T-cell (primary cell): ENCODE measurements at regions of chr4 and their contacts with region 1.

Region 1: DNA sequence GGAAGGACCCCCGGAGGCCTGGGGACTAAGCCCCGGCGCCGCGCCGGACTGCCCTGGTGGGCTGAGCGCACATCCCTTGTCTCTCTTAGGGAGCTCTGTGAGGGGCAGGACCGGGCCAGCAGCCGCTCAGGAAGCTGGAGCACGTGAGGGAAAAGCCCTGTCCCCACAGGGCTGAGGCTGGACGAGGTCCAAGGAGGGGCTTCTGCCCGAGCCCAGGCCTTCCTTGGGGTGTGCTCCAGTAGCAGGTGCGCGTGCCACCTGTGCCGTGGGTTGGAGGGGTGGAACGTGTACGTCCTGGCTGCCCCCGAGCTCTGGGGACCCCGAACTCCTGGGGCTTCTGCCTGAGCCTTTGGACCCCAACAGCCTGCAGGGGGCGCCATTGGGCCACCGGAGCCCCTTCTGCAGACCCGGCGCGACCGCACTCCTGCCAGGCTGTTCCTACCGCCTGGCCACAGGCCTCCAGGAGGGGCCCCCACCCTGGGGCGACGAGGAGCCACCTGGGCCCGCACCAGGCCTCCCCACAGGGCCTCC is 27.2 kb downstream of the TACC3 start:
- DNase-seq: peak; percentile 41 to 84 (median 69)
- ATAC-seq: peak in 3 of 4 experiments; percentile 52 to 67 (median 52)
- H3K4me3 ChIP-seq: no peak overlapping the region
- H3K4me3 Mint-ChIP-seq: no peak overlapping the region
- H3K27ac ChIP-seq: no peak overlapping the region
- H3K27ac Mint-ChIP-seq: no peak overlapping the region
- H3K4me1 ChIP-seq: peaks cover 9 to 31% of the 10 kb centered on the region in 2 experiments
- H3K4me1 Mint-ChIP-seq: peaks cover 0 to 5% (median 0%) of the 10 kb centered on the region in 3 donors
- H3K27me3 ChIP-seq: peaks cover 0 to 30% of the 10 kb centered on the region in 2 experiments
- H3K27me3 Mint-ChIP-seq: peaks cover 0 to 2% of the 10 kb centered on the region in 2 donors

Region 2: GRCh38 chr4:1683736-1684505 is 64.6 kb before region 1 on chr4 and contains the start of gene FAM53A:
- CTCF ChIA-PET with region 1: no interaction called
- POLR2A ChIA-PET with region 1: interaction called in 1 of 2 experiments, 10 read pairs
- DNase-seq: peak in 25 of 35 experiments; percentile 2 to 95 (median 24)
- ATAC-seq: peak; percentile 91 to 95 (median 93)
- H3K4me3 ChIP-seq: peak within 1 kb of the TSS; percentile 35 to 78
- H3K4me3 Mint-ChIP-seq: peak within 1 kb of the TSS; percentile 81 to 87 (median 86)
- H3K27ac ChIP-seq: peak within 1 kb of the TSS; percentile 2
- H3K27ac Mint-ChIP-seq: peak within 1 kb of the TSS; percentile 83 to 87
- H3K4me1 ChIP-seq: peaks cover 9 to 13% of the 10 kb centered on the region in 2 experiments
- H3K4me1 Mint-ChIP-seq: peaks cover 10 to 13% (median 13%) of the 10 kb centered on the region in 3 donors
- H3K27me3 ChIP-seq: no peaks in the 10 kb centered on the region
- H3K27me3 Mint-ChIP-seq: no peaks in the 10 kb centered on the region
- total RNA-seq, gene FAM53A: 1.4 to 3.0 (median 1.9) TPM

Region 3: DNA sequence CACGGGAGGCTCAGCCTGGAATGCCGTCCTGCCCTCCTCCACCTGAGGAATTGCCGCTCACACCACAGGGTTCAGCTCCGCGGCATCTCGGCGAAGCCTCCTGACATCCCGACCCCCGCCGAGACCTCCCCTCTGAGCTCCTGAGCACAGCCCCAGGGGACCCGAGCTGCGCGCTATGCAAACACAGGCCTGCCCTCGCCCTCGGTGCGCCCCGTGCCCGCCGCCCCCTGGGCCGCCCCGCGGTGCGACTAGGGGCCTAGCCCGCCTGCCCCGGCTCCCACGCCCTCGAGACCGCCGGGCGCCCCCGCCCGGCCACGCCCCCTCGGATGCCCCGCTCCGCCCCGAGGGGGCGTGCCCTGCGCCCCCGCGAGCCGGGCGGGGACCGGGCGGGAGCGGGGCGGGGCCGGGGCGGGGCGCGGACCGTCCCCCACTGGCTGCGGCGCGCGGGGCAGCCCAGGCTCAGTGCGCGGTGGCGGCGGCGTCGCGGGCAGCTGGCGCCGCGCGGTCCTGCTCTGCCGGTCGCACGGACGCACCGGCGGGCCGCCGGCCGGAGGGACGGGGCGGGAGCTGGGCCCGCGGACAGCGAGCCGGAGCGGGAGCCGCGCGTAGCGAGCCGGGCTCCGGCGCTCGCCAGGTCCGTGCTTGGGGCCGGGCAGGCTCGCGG is 44.4 kb after region 1 on chr4 and contains the start of gene FGFR3:
- CTCF ChIA-PET with region 1: no interaction called
- POLR2A ChIA-PET with region 1: no interaction called
- DNase-seq: peak in 8 of 35 experiments; percentile 10 to 64 (median 22)
- ATAC-seq: peak; percentile 75 to 86 (median 77)
- H3K4me3 ChIP-seq: peak within 1 kb of the TSS in 1 of 2 donors; percentile 65
- H3K4me3 Mint-ChIP-seq: peak within 1 kb of the TSS; percentile 39 to 67 (median 58)
- H3K27ac ChIP-seq: no peak within 1 kb of the TSS
- H3K27ac Mint-ChIP-seq: no peak within 1 kb of the TSS
- H3K4me1 ChIP-seq: peaks cover 0 to 20% of the 10 kb centered on the region in 2 experiments
- H3K4me1 Mint-ChIP-seq: peaks cover 0 to 5% (median 0%) of the 10 kb centered on the region in 3 donors
- H3K27me3 ChIP-seq: peaks cover 5 to 63% of the 10 kb centered on the region in 2 experiments
- H3K27me3 Mint-ChIP-seq: peaks cover 5 to 34% of the 10 kb centered on the region in 2 donors
- total RNA-seq, gene FGFR3: 0.70 to 0.91 (median 0.90) TPM in 3 of 5 donors, not detected in the others

Region 4: DNA sequence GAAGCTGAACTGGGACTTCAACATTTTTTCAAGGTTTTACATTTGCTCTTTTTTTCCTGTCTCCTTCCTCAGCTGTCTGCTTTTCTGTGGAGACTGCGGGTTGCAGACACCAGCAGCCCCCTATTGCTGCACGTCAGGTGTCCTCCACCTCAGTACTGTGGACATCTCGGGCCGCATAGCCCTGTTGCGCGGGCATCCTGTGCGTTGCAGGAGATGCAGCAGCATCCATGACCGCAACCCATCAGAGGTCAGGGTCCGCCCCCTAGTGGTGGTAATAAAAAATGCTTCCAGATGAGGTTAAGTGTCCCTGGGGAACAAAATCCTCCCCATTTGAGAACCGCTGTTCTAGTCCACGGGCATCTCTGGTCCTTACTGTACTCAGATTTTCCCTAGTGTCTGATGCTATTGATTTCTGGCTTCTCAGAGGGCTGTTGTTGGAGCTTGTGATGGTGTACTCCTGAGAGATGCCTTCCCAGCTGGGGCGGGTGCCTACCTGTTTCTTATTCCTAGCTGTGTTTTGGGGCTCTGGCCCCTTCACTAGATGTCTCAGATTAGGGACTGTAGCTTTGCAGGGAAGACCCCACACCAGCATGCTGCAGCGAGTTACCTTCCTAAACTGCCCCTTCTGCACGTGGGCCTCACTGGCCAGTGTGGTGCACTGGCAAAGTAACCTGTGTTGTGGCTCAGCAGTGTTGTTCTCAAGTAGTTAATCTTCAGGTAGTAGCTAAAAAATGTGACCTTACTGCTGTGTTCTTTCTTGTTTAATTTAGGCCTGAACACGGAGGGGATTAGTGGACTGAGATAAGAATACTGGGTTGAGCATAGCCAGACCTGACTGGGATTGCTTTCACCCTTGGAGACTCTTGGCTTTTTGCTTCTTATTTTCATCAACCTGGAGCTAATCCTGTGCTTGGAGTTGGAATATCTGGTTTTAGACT is 150.9 kb after region 1 on chr4:
- CTCF ChIA-PET with region 1: interaction called, 6 to 14 read pairs
- POLR2A ChIA-PET with region 1: no interaction called
- DNase-seq: peak; percentile 46 to 88 (median 62)
- ATAC-seq: peak; percentile 94 to 96 (median 95)
- H3K4me3 ChIP-seq: no peak overlapping the region
- H3K4me3 Mint-ChIP-seq: no peak overlapping the region
- H3K27ac ChIP-seq: no peak overlapping the region
- H3K27ac Mint-ChIP-seq: peak overlapping the region in 1 of 2 donors; percentile 81
- H3K4me1 ChIP-seq: peaks cover 0 to 5% of the 10 kb centered on the region in 2 experiments
- H3K4me1 Mint-ChIP-seq: peaks cover 6 to 18% (median 14%) of the 10 kb centered on the region in 3 donors
- H3K27me3 ChIP-seq: no peaks in the 10 kb centered on the region
- H3K27me3 Mint-ChIP-seq: no peaks in the 10 kb centered on the region